ENCODE measurements at regions of chr11 and their contacts with region 1.

Region 1: GRCh38 chr11:68447015-68447801 is 13.3 kb upstream of the PPP6R3 start:
- DNase-seq: peak; percentile 51
- ATAC-seq: peak; percentile 99
- H3K4me3 ChIP-seq: no peak overlapping the region
- H3K27ac ChIP-seq: no peak overlapping the region
- H3K4me1 ChIP-seq: peaks cover 4% of the 10 kb centered on the region; the same call in 1 of the 2 replicates
- H3K27me3 ChIP-seq: no peaks in the 10 kb centered on the region
- CTCF ChIP-seq: peak; percentile 93
- POLR2A ChIP-seq: no peak
- RAD21 ChIP-seq: peak; percentile 87

Region 2: GRCh38 chr11:68213555-68214174 is 233.5 kb before region 1 on chr11:
- CTCF ChIA-PET with region 1: no interaction called
- POLR2A ChIA-PET with region 1: interaction called, 12 read pairs
- dilution Hi-C with region 1: no loop called
- in situ Hi-C with region 1: no loop called
- intact Hi-C with region 1: loop called (anchors 1 kb)
- DNase-seq: peak; percentile 96
- ATAC-seq: peak; percentile 53
- H3K4me3 ChIP-seq: peak overlapping the region; percentile 100
- H3K27ac ChIP-seq: peak overlapping the region; percentile 89
- H3K4me1 ChIP-seq: peaks cover 5% of the 10 kb centered on the region; the same call in 1 of the 2 replicates
- H3K27me3 ChIP-seq: peaks cover 22% of the 10 kb centered on the region
- CTCF ChIP-seq: no peak
- POLR2A ChIP-seq: peak; percentile 93
- RAD21 ChIP-seq: no peak

Region 3: DNA sequence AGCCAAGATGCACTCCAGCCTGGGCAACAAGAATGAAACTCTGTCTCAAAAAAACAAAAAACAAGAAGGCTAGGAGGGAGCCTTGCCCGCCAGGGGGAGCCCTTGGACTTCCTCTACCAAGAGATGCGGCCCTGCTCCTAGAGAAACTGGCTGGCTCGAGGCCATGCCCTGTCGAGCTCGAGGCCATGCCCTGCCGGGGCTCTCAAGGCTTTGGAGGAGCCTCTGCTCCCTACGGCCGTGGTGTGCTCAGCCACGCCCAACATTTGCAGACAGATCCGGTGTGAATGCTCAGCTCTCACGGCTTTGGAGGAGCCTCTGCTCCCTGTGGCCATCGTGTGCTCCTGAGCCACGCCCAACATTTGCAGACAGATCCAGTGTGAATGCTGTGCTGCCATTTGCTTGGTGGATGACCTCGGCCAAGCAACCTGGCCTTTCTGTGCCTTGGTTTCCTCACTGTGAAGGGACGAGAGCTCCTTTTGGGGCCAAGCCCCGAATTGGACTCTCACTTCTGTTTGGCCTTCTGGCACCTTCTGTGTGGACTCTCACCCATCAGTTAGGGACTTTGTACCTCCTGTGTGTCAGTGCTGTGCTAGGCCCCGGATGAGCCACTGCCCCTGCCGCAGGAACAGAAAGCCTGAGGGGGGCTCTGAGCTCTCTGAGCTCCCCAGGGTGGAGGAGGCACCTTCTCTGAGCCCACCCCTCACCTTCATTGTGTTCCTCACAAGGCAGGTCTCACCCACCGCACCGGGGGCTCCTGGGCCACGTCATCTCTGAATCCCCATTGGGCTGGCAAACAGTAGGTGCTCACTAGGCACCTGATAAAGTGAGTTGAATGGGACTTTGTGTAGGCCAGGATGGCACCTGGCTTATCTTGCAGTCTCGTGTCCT is 189.5 kb before region 1 on chr11:
- CTCF ChIA-PET with region 1: no interaction called
- POLR2A ChIA-PET with region 1: no interaction called
- dilution Hi-C with region 1: no loop called
- in situ Hi-C with region 1: loop called (anchors 5 kb)
- intact Hi-C with region 1: loop called (anchors 2 kb)
- DNase-seq: peak; percentile 83
- ATAC-seq: peak; percentile 74
- H3K4me3 ChIP-seq: no peak overlapping the region
- H3K27ac ChIP-seq: no peak overlapping the region
- H3K4me1 ChIP-seq: peaks cover 11% of the 10 kb centered on the region
- H3K27me3 ChIP-seq: no peaks in the 10 kb centered on the region
- CTCF ChIP-seq: peak; percentile 85
- POLR2A ChIP-seq: no peak
- RAD21 ChIP-seq: peak; percentile 82

Region 4: DNA sequence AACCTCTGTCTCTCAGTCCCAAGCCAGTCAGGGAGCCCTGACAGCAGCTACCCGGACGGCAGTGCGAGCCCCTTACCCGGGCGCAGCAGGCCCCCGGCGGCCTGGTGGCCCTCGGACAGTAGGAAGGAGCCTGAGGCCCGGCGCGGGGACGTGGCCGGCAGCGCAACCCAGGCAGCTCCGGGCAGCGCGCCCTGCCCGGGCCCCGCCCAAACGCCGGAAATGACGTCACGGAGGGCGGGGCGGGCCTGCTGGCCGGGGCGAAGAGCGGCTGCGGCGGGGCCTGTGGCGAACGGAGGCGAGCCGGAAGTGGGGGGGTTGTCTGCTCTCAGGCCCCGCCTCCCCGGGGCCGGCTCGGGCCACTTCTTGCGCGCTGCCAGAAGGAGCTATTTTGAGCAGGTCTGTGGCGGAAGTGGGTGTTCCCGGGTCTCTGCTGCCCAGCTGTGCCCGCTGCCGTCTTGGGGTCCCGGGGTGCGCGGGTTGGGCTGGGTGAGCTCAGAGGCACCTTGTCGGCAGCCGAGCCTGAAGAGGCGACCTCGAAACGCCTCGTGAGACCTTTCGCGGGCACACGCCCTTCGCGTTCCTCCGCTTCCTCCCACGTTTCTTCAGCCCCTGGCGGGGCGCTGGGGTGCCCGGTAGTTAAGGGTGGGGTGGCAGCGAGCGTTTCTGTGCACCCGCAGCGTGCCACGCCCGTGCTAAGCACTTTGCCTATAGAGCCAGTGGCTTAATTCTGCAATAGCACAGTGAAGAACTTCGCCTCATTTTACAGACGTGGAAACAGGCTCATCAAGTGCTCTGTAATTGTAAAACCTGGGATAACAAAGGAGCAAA is 175.2 kb before region 1 on chr11 and contains the start of gene C11orf24:
- CTCF ChIA-PET with region 1: no interaction called
- POLR2A ChIA-PET with region 1: no interaction called
- dilution Hi-C with region 1: no loop called
- in situ Hi-C with region 1: no loop called
- intact Hi-C with region 1: loop called (anchors 1 kb)
- DNase-seq: peak; percentile 91
- ATAC-seq: peak; percentile 91
- H3K4me3 ChIP-seq: peak within 1 kb of the TSS; percentile 94
- H3K27ac ChIP-seq: peak within 1 kb of the TSS; percentile 97
- H3K4me1 ChIP-seq: peaks cover 10% of the 10 kb centered on the region
- H3K27me3 ChIP-seq: no peaks in the 10 kb centered on the region
- CTCF ChIP-seq: no peak
- POLR2A ChIP-seq: peak; percentile 96
- RAD21 ChIP-seq: no peak
- total RNA-seq, gene C11orf24: 41.1 and 42.5 TPM in 2 replicates

Region 5: GRCh38 chr11:68312117-68312779 is 135.0 kb before region 1 on chr11 and contains the start of gene LRP5:
- CTCF ChIA-PET with region 1: no interaction called
- POLR2A ChIA-PET with region 1: no interaction called
- dilution Hi-C with region 1: no loop called
- in situ Hi-C with region 1: no loop called
- intact Hi-C with region 1: loop called (anchors 5 kb)
- DNase-seq: peak; percentile 10
- ATAC-seq: peak; percentile 60
- H3K4me3 ChIP-seq: peak within 1 kb of the TSS; percentile 64
- H3K27ac ChIP-seq: peak within 1 kb of the TSS; percentile 19
- H3K4me1 ChIP-seq: peaks cover 13% of the 10 kb centered on the region
- H3K27me3 ChIP-seq: no peaks in the 10 kb centered on the region
- CTCF ChIP-seq: no peak
- POLR2A ChIP-seq: no peak
- RAD21 ChIP-seq: no peak
- total RNA-seq, gene LRP5: 10.4 and 11.1 TPM in 2 replicates